Activated T-helper 1 cell treated with anti-CD3 and anti-CD28 coated beads, Interleukin-12 subunit alpha, Interleukin-12 subunit beta, Interleukin-2, Interleukin-4 antibody, amounts not matched to agents 30 ng/mL and 10 ng/mL and 1 ng/mL, durations not matched to agents 14 hours and 24 hours and 36 hours (primary cell): ENCODE measurements at regions of chr10 and their contacts with region 1.

Region 1: GRCh38 chr10:52644373-52645186 is 128.0 kb downstream of the MBL2 start:
- DNase-seq: no peak
- H3K4me3 Mint-ChIP-seq: no peak overlapping the region
- H3K27ac Mint-ChIP-seq: no peak overlapping the region
- H3K4me1 Mint-ChIP-seq: no peaks in the 10 kb centered on the region
- H3K27me3 Mint-ChIP-seq: no peaks in the 10 kb centered on the region

Region 2: GRCh38 chr10:52390388-52390787 is 254.2 kb before region 1 on chr10:
- intact Hi-C with region 1: no loop called
- DNase-seq: no peak
- H3K4me3 Mint-ChIP-seq: no peak overlapping the region
- H3K27ac Mint-ChIP-seq: no peak overlapping the region
- H3K4me1 Mint-ChIP-seq: no peaks in the 10 kb centered on the region
- H3K27me3 Mint-ChIP-seq: no peaks in the 10 kb centered on the region

Region 3: GRCh38 chr10:52729271-52730104 is 84.9 kb after region 1 on chr10:
- intact Hi-C with region 1: loop called (anchors 1 kb)
- DNase-seq: no peak
- H3K4me3 Mint-ChIP-seq: no peak overlapping the region
- H3K27ac Mint-ChIP-seq: no peak overlapping the region
- H3K4me1 Mint-ChIP-seq: no peaks in the 10 kb centered on the region
- H3K27me3 Mint-ChIP-seq: no peaks in the 10 kb centered on the region